ENCODE measurements at regions of chr10 and their contacts with region 1.

Region 1: GRCh38 chr10:120950051-120950561 is 98.9 kb downstream of the WDR11 start:
- DNase-seq: peak; percentile 68 to 74
- H3K4me3 ChIP-seq: no peak overlapping the region
- H3K4me1 ChIP-seq: peaks cover 26% of the 10 kb centered on the region
- H3K27me3 ChIP-seq: no peaks in the 10 kb centered on the region

Region 2: DNA sequence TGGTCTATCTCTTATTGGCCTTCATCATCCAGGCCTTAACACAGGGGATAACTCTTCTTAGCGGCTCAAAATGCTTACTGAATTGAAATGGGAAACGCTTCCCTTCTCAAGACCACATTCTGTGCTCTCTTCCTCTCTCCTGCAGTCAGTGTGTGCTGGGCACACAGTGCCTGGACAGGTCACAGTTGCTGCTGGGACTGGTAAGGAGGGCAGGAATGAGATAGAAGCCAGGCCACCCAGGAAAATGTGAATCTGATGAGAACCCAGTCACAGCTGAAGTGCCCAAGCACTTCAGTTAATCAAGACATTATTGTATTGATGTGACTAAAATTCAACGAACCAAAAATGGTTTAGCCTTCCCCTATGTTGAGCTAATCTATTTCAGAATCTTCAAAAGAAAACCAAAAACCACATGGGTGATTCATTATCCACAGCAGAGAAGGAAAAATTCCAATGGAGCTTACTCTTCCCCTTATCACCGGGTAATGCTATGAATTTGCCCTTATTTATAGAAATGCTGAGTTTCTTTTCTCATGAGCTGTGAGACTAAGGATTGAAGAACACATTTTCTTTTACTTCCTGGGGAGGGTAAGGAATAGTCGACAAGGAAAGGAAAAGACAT is 534.3 kb before region 1 on chr10:
- in situ Hi-C with region 1: no loop called
- DNase-seq: no peak
- H3K4me3 ChIP-seq: no peak overlapping the region
- H3K4me1 ChIP-seq: no peaks in the 10 kb centered on the region
- H3K27me3 ChIP-seq: peaks cover 5% of the 10 kb centered on the region; the same call in 1 of the 2 replicates

Region 3: DNA sequence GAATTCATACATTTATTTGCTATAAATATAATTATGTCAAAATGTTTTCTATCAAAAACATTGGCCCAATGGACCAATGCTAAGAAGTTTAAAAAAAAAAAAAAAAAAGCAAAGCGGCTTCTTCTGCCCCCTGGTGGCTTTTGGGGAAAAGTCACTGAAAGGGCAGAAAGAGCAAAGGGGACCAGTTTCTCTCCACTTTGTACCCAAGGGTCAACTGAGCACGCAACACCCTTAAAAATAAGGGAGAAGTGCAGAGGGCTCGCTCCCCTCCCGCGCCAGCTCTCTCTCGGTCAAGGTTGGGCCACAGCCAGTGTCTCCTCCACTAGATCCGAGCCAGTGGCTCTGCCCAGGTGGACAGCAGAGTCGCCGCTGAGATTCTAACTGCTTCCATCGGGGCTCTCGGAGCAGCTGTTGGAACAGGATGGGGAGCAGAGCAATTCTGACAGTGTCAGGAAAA is 784.5 kb after region 1 on chr10:
- in situ Hi-C with region 1: loop called (anchors 5 kb)
- DNase-seq: peak; percentile 29 to 49
- H3K4me3 ChIP-seq: no peak overlapping the region
- H3K4me1 ChIP-seq: peaks cover 25% of the 10 kb centered on the region
- H3K27me3 ChIP-seq: no peaks in the 10 kb centered on the region

Measured in HAP-1 (cell line).